B cell (primary cell): ENCODE measurements at regions of chr15 and their contacts with region 1.

Region 1: DNA sequence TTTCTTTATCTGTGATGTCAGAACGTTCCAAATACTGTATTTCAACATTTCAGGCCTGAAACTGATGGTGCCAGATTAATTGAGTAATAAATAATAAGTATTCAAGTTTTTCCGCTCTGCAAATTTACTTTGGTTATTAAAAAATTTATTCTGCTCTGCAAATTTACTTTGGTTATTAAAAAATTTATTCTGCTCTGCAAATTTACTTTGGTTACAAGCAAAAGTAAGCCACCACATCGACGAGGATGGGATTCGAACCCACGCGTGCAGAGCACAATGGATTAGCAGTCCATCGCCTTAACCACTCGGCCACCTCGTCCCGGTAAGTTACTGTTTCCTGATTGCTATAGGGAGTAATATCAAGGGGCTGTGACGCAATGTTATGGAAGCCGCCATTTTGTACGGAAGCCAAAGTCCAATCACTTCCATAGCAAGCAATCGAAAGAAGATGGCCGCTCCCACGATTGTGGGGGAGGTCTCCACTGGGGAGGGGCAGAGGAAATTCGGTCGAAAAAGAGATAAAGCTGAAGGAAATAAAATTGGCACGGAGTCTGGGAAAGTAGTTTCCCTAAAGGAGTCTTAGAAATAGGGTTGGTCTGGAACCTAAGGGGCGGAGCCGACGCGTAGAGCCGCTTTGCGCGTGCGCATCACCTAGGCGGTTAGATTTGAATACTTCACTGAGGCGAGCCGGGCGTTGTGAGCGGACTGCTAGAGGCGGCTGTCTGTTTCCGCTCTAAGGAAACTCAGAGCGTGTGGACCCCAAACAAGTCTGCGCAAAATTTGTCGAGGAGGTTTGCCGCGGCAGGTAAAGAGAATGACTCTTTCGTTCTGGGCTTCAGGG is at the start of gene KNL1:
- DNase-seq: peak; percentile 96
- ATAC-seq: peak; percentile 82
- H3K4me3 ChIP-seq: peak within 1 kb of the TSS; percentile 63 to 92 (median 80)
- H3K4me3 Mint-ChIP-seq: peak within 1 kb of the TSS; percentile 96
- H3K27ac ChIP-seq: peak within 1 kb of the TSS; percentile 89 to 92
- H3K27ac Mint-ChIP-seq: peak within 1 kb of the TSS; percentile 99
- H3K4me1 ChIP-seq: peaks cover 10 to 22% of the 10 kb centered on the region in 2 donors
- H3K4me1 Mint-ChIP-seq: peaks cover 23% of the 10 kb centered on the region
- H3K27me3 ChIP-seq: no peaks in the 10 kb centered on the region
- H3K27me3 Mint-ChIP-seq: no peaks in the 10 kb centered on the region
- CTCF ChIP-seq: no peak
- total RNA-seq, gene KNL1: 3.7 and 4.0 TPM in 2 replicates

Region 2: GRCh38 chr15:39213385-39213840 is 1380.4 kb before region 1 on chr15:
- CTCF ChIA-PET with region 1: no interaction called
- POLR2A ChIA-PET with region 1: no interaction called
- intact Hi-C with region 1: no loop called
- DNase-seq: no peak
- ATAC-seq: no peak
- H3K4me3 ChIP-seq: no peak overlapping the region
- H3K4me3 Mint-ChIP-seq: no peak overlapping the region
- H3K27ac ChIP-seq: no peak overlapping the region
- H3K27ac Mint-ChIP-seq: no peak overlapping the region
- H3K4me1 ChIP-seq: no peaks in the 10 kb centered on the region
- H3K4me1 Mint-ChIP-seq: no peaks in the 10 kb centered on the region
- H3K27me3 ChIP-seq: no peaks in the 10 kb centered on the region
- H3K27me3 Mint-ChIP-seq: peaks cover 16% of the 10 kb centered on the region
- CTCF ChIP-seq: no peak

Region 3: GRCh38 chr15:40279437-40280141 is 314.2 kb before region 1 on chr15:
- CTCF ChIA-PET with region 1: no interaction called
- POLR2A ChIA-PET with region 1: no interaction called
- intact Hi-C with region 1: no loop called
- DNase-seq: peak; percentile 76
- ATAC-seq: peak; percentile 28
- H3K4me3 ChIP-seq: no peak overlapping the region
- H3K4me3 Mint-ChIP-seq: peak overlapping the region; percentile 59
- H3K27ac ChIP-seq: no peak overlapping the region
- H3K27ac Mint-ChIP-seq: no peak overlapping the region
- H3K4me1 ChIP-seq: peaks cover 19 to 36% of the 10 kb centered on the region in 2 donors
- H3K4me1 Mint-ChIP-seq: peaks cover 29% of the 10 kb centered on the region
- H3K27me3 ChIP-seq: peaks cover 0 to 53% (median 23%) of the 10 kb centered on the region in 4 experiments
- H3K27me3 Mint-ChIP-seq: peaks cover 24% of the 10 kb centered on the region
- CTCF ChIP-seq: peak; percentile 100

Region 4: DNA sequence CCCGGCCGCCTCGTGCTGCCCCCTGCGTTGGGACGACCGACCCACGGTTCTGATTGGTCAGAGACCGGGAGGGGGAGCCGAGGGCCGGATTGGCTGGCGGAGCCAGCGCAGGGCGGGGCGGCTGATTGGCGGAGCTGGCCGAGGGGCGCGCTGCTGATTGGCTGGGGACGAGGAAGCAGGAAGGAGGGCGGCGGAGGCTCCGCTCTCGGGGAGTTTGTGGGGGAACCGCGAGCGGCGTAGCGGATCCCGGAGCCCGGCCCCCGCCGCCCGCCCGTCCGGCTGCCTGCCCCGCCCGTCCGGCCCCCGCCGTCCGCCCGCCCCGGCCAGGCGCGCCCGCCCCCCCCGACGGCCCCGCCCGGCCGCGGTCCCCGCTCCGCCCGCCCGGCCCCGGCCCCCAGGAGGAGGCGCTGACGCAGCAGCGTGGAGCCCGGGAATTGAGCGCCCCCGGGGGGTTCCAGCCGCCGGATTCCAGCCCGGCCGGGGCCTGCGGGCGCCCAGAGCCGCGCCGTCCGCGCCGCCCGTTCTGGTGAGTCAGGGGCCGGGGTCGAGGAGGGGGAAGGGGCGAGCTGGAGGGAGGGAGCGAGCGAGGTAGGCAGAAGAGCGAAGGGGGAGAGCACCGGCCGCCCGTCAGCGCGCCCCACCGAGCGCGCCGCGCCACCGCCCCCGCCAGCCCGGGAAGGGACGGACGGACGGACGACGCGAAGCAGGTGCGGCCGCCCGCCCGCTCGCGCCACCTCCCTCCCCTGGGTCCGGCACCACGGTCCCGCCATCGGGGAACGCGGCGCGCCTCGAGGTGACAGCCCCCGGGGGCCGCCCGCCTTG is 152.9 kb before region 1 on chr15 and contains the start of gene BAHD1:
- CTCF ChIA-PET with region 1: interaction called, 3 read pairs
- POLR2A ChIA-PET with region 1: no interaction called
- intact Hi-C with region 1: loop called (anchors 5 kb)
- DNase-seq: peak; percentile 94
- ATAC-seq: peak; percentile 90
- H3K4me3 ChIP-seq: peak within 1 kb of the TSS; percentile 15 to 80 (median 59)
- H3K4me3 Mint-ChIP-seq: peak within 1 kb of the TSS; percentile 91
- H3K27ac ChIP-seq: peak within 1 kb of the TSS in 1 of 2 donors; percentile 48
- H3K27ac Mint-ChIP-seq: peak within 1 kb of the TSS; percentile 89
- H3K4me1 ChIP-seq: peaks cover 37 to 44% of the 10 kb centered on the region in 2 donors
- H3K4me1 Mint-ChIP-seq: peaks cover 61% of the 10 kb centered on the region
- H3K27me3 ChIP-seq: peaks cover 0 to 35% (median 15%) of the 10 kb centered on the region in 4 experiments
- H3K27me3 Mint-ChIP-seq: peaks cover 25% of the 10 kb centered on the region
- CTCF ChIP-seq: no peak
- total RNA-seq, gene BAHD1: 34.7 and 34.8 TPM in 2 replicates

Region 5: GRCh38 chr15:40550341-40551037 is 43.3 kb before region 1 on chr15:
- CTCF ChIA-PET with region 1: interaction called, 12 read pairs
- POLR2A ChIA-PET with region 1: interaction called, 3 read pairs
- intact Hi-C with region 1: loop called (anchors 5 kb)
- DNase-seq: peak; percentile 86
- ATAC-seq: peak; percentile 83
- H3K4me3 ChIP-seq: peak overlapping the region in 3 of 5 experiments; percentile 0 to 28 (median 19)
- H3K4me3 Mint-ChIP-seq: peak overlapping the region; percentile 75
- H3K27ac ChIP-seq: peak overlapping the region; percentile 84 to 90
- H3K27ac Mint-ChIP-seq: peak overlapping the region; percentile 91
- H3K4me1 ChIP-seq: peaks cover 80 to 100% of the 10 kb centered on the region in 2 donors
- H3K4me1 Mint-ChIP-seq: peaks cover 86% of the 10 kb centered on the region
- H3K27me3 ChIP-seq: no peaks in the 10 kb centered on the region
- H3K27me3 Mint-ChIP-seq: no peaks in the 10 kb centered on the region
- CTCF ChIP-seq: no peak

Region 6: GRCh38 chr15:40684381-40684780 is 90.6 kb after region 1 on chr15:
- CTCF ChIA-PET with region 1: interaction called, 7 read pairs
- POLR2A ChIA-PET with region 1: no interaction called
- intact Hi-C with region 1: loop called (anchors 1 kb)
- DNase-seq: no peak
- ATAC-seq: no peak
- H3K4me3 ChIP-seq: no peak overlapping the region
- H3K4me3 Mint-ChIP-seq: no peak overlapping the region
- H3K27ac ChIP-seq: no peak overlapping the region
- H3K27ac Mint-ChIP-seq: peak overlapping the region; percentile 41
- H3K4me1 ChIP-seq: peaks cover 11 to 15% of the 10 kb centered on the region in 2 donors
- H3K4me1 Mint-ChIP-seq: peaks cover 12% of the 10 kb centered on the region
- H3K27me3 ChIP-seq: no peaks in the 10 kb centered on the region
- H3K27me3 Mint-ChIP-seq: no peaks in the 10 kb centered on the region
- CTCF ChIP-seq: no peak

Region 7: DNA sequence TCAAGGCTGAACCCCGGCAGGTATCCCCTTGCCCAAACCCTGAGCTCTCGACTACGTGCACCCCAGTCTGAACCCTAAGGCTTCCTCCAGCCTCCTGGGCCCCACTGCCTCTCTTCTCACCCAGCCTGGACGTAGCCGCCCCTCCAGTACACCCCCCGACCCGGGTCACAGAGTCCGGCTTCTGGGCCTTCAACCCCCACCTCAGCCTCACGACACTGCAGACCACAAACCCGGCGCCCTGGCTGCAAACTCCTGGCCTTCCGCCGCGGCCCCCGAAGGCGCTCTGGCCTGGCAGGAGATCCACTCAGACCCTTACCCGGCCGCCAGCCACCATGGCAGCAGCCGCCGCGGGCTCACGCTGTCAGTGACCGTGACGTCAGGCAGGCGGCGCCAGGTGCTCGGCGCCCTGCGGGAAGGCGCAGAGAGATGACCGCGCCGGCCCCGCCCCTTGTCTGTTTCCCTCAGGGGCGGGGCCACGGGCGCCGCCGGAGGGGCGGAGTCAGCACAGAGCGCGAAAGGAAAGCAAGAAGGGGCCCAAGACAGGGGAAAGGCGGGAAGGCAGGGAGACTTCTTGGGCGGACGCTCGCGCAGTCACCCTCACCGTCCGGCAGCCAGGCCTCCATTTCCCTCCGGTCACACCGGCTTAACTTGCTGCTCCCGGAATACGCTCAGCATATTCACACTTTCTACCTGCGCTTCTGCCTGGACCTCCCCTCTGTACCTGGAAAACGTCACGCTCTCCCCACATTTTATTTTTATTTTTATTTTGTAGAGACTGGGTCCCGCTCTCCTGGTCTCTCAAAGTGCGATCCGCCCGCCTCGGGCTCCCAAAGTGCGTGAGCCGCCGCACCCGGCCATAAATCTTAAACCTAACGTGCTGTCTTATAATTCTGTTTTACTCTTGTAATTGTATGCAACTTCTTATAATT is 161.3 kb after region 1 on chr15 and contains the start of gene RMDN3:
- CTCF ChIA-PET with region 1: no interaction called
- POLR2A ChIA-PET with region 1: no interaction called
- intact Hi-C with region 1: loop called (anchors 1 kb)
- DNase-seq: peak; percentile 96
- ATAC-seq: peak; percentile 98
- H3K4me3 ChIP-seq: peak within 1 kb of the TSS; percentile 66 to 100 (median 94)
- H3K4me3 Mint-ChIP-seq: peak within 1 kb of the TSS; percentile 93
- H3K27ac ChIP-seq: peak within 1 kb of the TSS; percentile 73 to 89
- H3K27ac Mint-ChIP-seq: peak within 1 kb of the TSS; percentile 93
- H3K4me1 ChIP-seq: peaks cover 8 to 19% of the 10 kb centered on the region in 2 donors
- H3K4me1 Mint-ChIP-seq: peaks cover 23% of the 10 kb centered on the region
- H3K27me3 ChIP-seq: no peaks in the 10 kb centered on the region
- H3K27me3 Mint-ChIP-seq: no peaks in the 10 kb centered on the region
- CTCF ChIP-seq: no peak
- total RNA-seq, gene RMDN3: 22.1 and 24.2 TPM in 2 replicates

Region 8: GRCh38 chr15:40807028-40807887 is 213.4 kb after region 1 on chr15 and contains the starts of genes DNAJC17 and ZFYVE19:
- CTCF ChIA-PET with region 1: interaction called, 5 read pairs
- POLR2A ChIA-PET with region 1: no interaction called
- intact Hi-C with region 1: loop called (anchors 1 kb)
- DNase-seq: peak; percentile 97
- ATAC-seq: peak; percentile 96
- H3K4me3 ChIP-seq: peak within 1 kb of the TSS; percentile 78 to 100 (median 100)
- H3K4me3 Mint-ChIP-seq: peak within 1 kb of the TSS; percentile 99
- H3K27ac ChIP-seq: peak within 1 kb of the TSS; percentile 86 to 95
- H3K27ac Mint-ChIP-seq: peak within 1 kb of the TSS; percentile 98
- H3K4me1 ChIP-seq: peaks cover 12 to 18% of the 10 kb centered on the region in 2 donors
- H3K4me1 Mint-ChIP-seq: peaks cover 24% of the 10 kb centered on the region
- H3K27me3 ChIP-seq: no peaks in the 10 kb centered on the region
- H3K27me3 Mint-ChIP-seq: no peaks in the 10 kb centered on the region
- CTCF ChIP-seq: peak; percentile 11
- total RNA-seq, gene DNAJC17: 46.1 and 52.3 TPM in 2 replicates
- total RNA-seq, gene ZFYVE19: 29.4 and 29.8 TPM in 2 replicates